ENCODE measurements at regions of chr6 and their contacts with region 1.

Region 1: GRCh38 chr6:33771146-33772081 is 17.5 kb downstream of the LEMD2 start:
- DNase-seq: peak; percentile 43
- H3K4me3 Mint-ChIP-seq: no peak overlapping the region
- H3K27ac Mint-ChIP-seq: no peak overlapping the region
- H3K4me1 Mint-ChIP-seq: peaks cover 3% of the 10 kb centered on the region
- H3K27me3 Mint-ChIP-seq: no peaks in the 10 kb centered on the region

Region 2: GRCh38 chr6:33579828-33580714 is 191.3 kb before region 1 on chr6 and contains the start of gene BAK1:
- intact Hi-C with region 1: loop called (anchors 10 kb)
- DNase-seq: peak; percentile 81
- H3K4me3 Mint-ChIP-seq: peak within 1 kb of the TSS; percentile 96
- H3K27ac Mint-ChIP-seq: peak within 1 kb of the TSS; percentile 99
- H3K4me1 Mint-ChIP-seq: peaks cover 20% of the 10 kb centered on the region
- H3K27me3 Mint-ChIP-seq: no peaks in the 10 kb centered on the region
- total RNA-seq, gene BAK1: 53.2 and 53.4 TPM in 2 replicates

Region 3: DNA sequence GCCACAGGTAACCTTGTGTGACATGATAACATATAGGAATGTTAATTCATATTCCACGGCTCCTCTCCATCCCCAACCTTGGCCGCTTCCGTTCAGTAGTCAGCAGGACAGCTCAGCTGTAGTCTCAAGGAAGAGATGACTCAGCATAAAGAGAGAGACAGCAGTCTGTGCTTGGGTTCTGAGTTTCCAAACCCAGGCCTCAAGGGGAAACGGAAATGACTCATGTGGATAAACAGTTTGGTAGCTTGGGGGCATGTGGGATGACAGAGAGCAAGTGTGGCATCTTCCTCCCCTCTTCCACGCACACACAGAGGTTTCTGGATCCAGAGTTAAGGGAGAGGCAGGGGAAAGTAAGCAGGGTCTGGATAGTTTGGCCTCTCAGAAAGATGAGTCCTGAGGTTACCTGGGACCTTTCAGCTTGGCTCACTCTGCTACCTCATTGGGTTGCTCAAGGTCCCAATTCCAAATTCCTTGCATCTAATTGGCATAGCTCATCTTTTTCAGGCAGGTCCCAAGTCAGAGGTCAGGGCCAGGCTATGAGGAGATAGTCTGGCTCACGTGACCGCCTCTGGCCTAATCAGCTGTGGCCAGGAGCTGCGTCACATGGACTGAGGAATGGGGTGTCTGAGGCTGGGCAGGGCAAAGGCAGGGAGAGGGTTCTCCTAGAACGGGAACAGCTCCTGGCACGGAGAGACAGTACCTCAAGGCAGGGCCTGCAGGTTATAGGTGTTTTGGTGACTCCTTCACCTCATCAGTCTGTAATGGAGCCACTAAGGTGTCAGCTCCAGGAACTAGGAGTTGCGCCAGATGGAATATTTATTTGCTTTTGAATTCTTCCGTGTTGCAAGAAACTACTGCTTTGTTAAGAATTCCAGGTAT is 68.9 kb after region 1 on chr6:
- intact Hi-C with region 1: no loop called
- DNase-seq: peak; percentile 25
- H3K4me3 Mint-ChIP-seq: no peak overlapping the region
- H3K27ac Mint-ChIP-seq: peak overlapping the region; percentile 52
- H3K4me1 Mint-ChIP-seq: peaks cover 16% of the 10 kb centered on the region
- H3K27me3 Mint-ChIP-seq: peaks cover 12% of the 10 kb centered on the region

Region 4: DNA sequence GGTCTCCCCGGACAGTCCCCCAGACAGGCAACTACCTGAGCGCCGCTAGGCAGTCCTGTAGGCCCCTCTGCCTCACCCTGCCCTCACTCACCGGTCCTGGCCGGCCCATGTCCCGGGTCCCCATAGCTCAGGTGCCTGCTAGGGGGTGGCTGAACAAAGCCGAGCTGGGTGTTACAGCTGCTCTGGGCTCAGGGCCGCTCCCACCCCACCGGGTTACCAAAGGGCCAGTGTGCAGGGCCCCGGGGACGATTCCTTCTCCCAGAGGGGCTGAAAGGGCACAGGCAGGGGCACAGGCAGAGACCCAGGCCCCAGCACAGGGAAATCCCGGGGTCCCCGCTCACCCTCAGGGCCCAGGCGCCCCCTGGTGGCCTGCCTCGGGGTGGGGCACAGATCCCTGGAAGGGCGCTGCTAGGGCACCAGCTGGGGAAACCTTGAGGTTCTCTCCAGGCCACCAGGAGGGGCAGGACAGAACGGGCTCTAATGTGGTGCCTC is 256.1 kb after region 1 on chr6:
- intact Hi-C with region 1: loop called (anchors 1 kb)
- DNase-seq: peak; percentile 33
- H3K4me3 Mint-ChIP-seq: no peak overlapping the region
- H3K27ac Mint-ChIP-seq: no peak overlapping the region
- H3K4me1 Mint-ChIP-seq: no peaks in the 10 kb centered on the region
- H3K27me3 Mint-ChIP-seq: peaks cover 2% of the 10 kb centered on the region

Region 5: DNA sequence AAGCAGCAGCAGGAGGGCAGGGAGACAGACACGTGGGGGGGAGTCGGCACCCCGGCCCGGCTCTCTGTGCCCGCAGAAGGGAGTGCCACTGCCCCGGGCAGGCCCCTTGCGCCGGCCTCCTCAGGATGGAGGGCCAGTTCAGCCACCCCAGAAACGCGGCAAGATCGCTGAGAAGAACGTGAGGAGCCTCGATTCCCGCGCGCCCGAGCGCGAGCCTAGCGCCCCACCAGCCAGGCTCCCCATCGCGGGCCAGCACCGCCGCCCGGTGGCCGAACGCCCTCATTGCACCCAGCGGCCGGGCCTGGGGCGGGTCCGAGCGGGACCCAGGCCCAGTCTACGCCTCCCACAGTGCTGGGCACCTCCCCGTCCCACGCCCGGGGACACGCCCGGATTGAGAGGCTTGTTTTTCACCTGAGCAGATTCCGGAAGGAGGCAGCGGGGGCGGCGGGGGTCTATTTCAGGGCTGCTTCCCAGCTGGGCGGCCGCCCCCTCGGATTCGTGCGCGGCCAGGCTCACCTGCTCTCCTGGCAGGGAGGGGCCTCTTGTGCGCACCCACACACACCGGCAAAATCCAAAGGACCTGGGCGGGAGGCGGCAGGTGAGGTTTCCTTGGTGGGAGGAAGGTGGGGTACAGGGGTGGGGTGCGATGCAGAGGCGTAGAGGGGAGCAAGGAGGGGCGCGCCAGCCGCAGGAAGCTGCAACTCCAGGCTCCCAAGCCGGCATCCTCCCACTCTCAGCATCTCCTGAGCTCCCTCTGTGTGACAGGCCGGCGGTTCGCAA is 383.4 kb after region 1 on chr6:
- intact Hi-C with region 1: loop called (anchors 5 kb)
- DNase-seq: peak; percentile 44
- H3K4me3 Mint-ChIP-seq: no peak overlapping the region
- H3K27ac Mint-ChIP-seq: no peak overlapping the region
- H3K4me1 Mint-ChIP-seq: no peaks in the 10 kb centered on the region
- H3K27me3 Mint-ChIP-seq: peaks cover 60% of the 10 kb centered on the region

Measured in activated T-helper 2 cell treated with anti-CD3 and anti-CD28 coated beads, Interferon-gamma antibody, Interleukin-2, Interleukin-4, amounts not matched to agents 10 μg/mL and 5 μg/mL and 100 μg/mL, durations not matched to agents 14 hours and 24 hours and 36 hours (primary cell).